Heart right ventricle (tissue), 16 donors: ENCODE measurements at regions of chr22 and their contacts with region 1.

Region 1: DNA sequence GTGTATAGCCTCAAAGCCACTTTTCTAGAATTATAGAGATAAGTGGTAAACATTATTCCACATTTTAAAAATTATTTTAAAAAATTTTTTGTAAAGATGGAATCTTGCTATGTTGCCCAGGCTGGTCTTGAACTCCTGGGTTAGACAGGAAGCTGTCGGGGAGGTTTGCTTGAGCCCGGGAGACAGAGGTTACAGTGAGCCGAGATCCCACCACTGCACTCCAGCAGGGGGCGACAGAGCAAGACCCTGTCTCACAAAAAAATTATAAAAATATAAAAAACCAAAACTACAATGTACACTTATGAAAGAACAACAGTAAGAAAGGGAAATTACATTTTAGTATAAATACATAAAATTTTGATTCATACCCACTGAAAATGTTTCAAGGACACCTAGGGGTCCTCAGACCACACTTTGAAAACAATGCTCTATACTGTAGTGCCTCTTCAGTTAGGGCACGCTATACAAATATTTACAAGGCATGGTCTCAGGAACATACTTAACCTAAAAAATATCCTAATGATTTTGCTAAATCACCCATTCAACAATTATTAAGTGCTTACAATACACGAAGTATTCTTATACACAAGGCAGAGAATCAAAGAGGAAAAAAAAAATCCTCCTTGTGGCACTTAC is 111.2 kb downstream of the MRTFA start:
- DNase-seq: peak; percentile 31 to 50
- ATAC-seq: peak in 2 of 8 donors; percentile 49
- H3K4me3 ChIP-seq: no peak overlapping the region
- H3K27ac ChIP-seq: no peak overlapping the region
- H3K4me1 ChIP-seq: peaks cover 0 to 29% (median 0%) of the 10 kb centered on the region in 9 donors
- H3K27me3 ChIP-seq: no peaks in the 10 kb centered on the region
- CTCF ChIP-seq: peak; percentile 52 to 84 (median 71)

Region 2: GRCh38 chr22:40443732-40444131 is 81.6 kb before region 1 on chr22:
- intact Hi-C with region 1: loop called in 2 of 10 experiments (anchors 5 kb)
- DNase-seq: no peak
- ATAC-seq: peak in 6 of 8 donors; percentile 38 to 91 (median 66)
- H3K4me3 ChIP-seq: no peak overlapping the region
- H3K27ac ChIP-seq: peak overlapping the region in 3 of 10 donors; percentile 9 to 45 (median 35)
- H3K4me1 ChIP-seq: peaks cover 2 to 98% (median 12%) of the 10 kb centered on the region in 9 donors
- H3K27me3 ChIP-seq: no peaks in the 10 kb centered on the region
- CTCF ChIP-seq: no peak

Region 3: GRCh38 chr22:40597526-40598430 is 72.4 kb after region 1 on chr22:
- intact Hi-C with region 1: loop called in 1 of 10 experiments (anchors 2 kb)
- DNase-seq: no peak
- ATAC-seq: peak in 2 of 8 donors; percentile 39 to 46
- H3K4me3 ChIP-seq: no peak overlapping the region
- H3K27ac ChIP-seq: no peak overlapping the region
- H3K4me1 ChIP-seq: peaks cover 3 to 85% (median 64%) of the 10 kb centered on the region in 9 donors
- H3K27me3 ChIP-seq: no peaks in the 10 kb centered on the region
- CTCF ChIP-seq: peak in 2 of 9 donors; percentile 5 to 18

Region 4: GRCh38 chr22:40645579-40646197 is 120.3 kb after region 1 on chr22:
- intact Hi-C with region 1: loop called in 7 of 10 experiments (anchors 5 to 10 kb)
- DNase-seq: no peak
- ATAC-seq: peak in 2 of 8 donors; percentile 3 to 5
- H3K4me3 ChIP-seq: no peak overlapping the region
- H3K27ac ChIP-seq: peak overlapping the region in 2 of 10 donors; percentile 37 to 60
- H3K4me1 ChIP-seq: peaks cover 0 to 11% (median 0%) of the 10 kb centered on the region in 9 donors
- H3K27me3 ChIP-seq: no peaks in the 10 kb centered on the region
- CTCF ChIP-seq: no peak